ENCODE measurements at regions of chr17 and their contacts with region 1.

Region 1: DNA sequence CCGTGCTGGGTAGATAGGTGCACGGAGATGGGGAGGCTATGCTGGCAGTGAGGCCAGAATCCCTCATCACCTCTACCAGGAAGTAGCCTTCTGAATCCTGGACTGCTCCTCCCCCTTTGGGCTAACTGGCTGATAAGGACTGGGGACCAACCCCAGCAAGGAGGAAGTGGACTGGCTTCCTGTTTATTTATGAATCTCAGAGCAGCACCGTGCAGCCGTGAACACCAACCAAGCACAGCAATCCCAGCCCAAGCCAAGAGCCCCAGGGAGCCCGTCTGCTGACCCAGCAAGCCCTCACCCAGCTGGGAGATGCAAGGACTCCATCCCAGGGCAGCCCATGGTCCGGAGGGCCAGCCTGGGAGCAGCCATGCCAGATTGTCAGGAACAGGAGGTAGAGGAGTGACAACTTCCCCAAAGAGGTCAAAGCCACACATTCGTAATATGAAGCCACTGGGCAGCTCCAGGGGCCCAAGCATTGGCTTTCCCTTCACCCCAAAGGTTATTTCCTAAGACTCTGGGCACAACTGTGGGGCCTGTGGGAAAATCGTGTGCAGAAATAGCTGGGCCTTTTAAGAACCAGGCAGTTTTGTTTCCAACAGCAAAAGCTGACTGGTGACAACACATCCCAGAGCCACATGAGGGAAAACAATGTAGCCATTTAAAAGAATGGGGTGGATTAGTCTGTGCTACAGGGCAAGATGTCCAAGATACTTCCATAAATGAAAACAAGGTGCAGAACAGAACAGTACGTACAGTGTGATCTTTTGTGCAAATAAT is 23.9 kb downstream of the PHB1 start:
- DNase-seq: no peak
- ATAC-seq: peak; percentile 59
- H3K4me3 ChIP-seq: peak overlapping the region; percentile 42; the same call in 1 of the 2 replicates
- H3K27ac ChIP-seq: peak overlapping the region; percentile 64
- H3K4me1 ChIP-seq: peaks cover 39% of the 10 kb centered on the region
- H3K27me3 ChIP-seq: no peaks in the 10 kb centered on the region
- CTCF ChIP-seq: no peak
- EP300 ChIP-seq: no peak
- POLR2A ChIP-seq: no peak
- RAD21 ChIP-seq: no peak

Region 2: GRCh38 chr17:49407981-49408501 is 17.3 kb after region 1 on chr17:
- CTCF ChIA-PET with region 1: interaction called, 24 read pairs
- POLR2A ChIA-PET with region 1: no interaction called
- RAD21 ChIA-PET with region 1: no interaction called
- SMC1A ChIA-PET with region 1: interaction called, 3 read pairs
- in situ Hi-C with region 1: no loop called
- intact Hi-C with region 1: no loop called
- DNase-seq: no peak
- ATAC-seq: peak; percentile 100
- H3K4me3 ChIP-seq: no peak overlapping the region
- H3K27ac ChIP-seq: no peak overlapping the region
- H3K4me1 ChIP-seq: peaks cover 10% of the 10 kb centered on the region
- H3K27me3 ChIP-seq: no peaks in the 10 kb centered on the region
- CTCF ChIP-seq: peak; percentile 96 to 99 (median 98)
- EP300 ChIP-seq: no peak
- POLR2A ChIP-seq: no peak
- RAD21 ChIP-seq: peak; percentile 80